ENCODE measurements at regions of chr17 and their contacts with region 1.

Region 1: DNA sequence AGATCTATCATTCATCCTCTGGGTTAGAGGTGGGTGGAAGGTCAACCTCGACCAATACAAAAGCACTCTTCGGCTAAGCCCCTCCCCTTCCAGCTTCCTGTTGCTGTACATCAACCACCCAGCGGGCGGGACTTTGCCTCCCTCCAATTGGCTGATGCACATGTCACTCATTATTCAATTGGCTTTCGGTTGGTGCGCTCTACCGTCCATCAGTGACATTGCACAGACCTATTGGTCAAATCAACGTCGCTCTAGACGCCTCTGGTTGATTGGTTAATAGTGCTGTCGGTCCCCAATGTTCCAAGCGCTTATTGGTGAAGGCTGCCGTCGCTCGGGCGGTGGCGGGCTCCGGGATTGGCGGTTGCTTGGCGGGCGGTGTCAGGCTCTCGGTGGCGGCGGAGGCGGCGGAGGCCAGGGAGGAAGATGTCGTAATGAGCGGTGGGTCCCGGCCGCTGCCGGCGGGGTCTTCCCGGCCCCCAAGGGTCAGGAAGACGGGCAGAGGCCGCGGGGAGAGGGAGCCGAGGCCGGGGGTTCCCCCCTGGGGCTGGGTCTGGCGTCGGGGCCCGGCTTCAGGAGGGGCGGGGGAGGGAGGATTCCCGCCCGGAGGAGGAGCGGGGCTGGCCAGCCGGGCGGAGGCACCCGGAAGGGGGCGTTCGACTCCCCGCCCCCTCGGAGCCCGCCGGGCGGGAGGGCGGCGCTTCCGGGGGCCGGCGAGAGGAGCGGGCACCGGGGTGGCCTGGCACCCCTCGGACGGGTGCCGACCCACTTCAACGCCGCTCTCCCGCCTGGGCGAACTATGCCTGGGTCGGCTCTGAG is at the start of gene SP2:
- DNase-seq: peak; percentile 93 to 100 (median 100)
- ATAC-seq: peak; percentile 88 to 89
- H3K4me3 Mint-ChIP-seq: peak within 1 kb of the TSS; percentile 89 to 100 (median 99)
- H3K27ac Mint-ChIP-seq: peak within 1 kb of the TSS; percentile 98 to 100 (median 100)
- H3K4me1 Mint-ChIP-seq: peaks cover 23 to 60% (median 54%) of the 10 kb centered on the region in 4 donors
- H3K27me3 Mint-ChIP-seq: peaks cover 0 to 3% (median 0%) of the 10 kb centered on the region in 5 donors
- polyA plus RNA-seq, gene SP2: 4.5 to 13.0 (median 9.6) TPM

Region 2: DNA sequence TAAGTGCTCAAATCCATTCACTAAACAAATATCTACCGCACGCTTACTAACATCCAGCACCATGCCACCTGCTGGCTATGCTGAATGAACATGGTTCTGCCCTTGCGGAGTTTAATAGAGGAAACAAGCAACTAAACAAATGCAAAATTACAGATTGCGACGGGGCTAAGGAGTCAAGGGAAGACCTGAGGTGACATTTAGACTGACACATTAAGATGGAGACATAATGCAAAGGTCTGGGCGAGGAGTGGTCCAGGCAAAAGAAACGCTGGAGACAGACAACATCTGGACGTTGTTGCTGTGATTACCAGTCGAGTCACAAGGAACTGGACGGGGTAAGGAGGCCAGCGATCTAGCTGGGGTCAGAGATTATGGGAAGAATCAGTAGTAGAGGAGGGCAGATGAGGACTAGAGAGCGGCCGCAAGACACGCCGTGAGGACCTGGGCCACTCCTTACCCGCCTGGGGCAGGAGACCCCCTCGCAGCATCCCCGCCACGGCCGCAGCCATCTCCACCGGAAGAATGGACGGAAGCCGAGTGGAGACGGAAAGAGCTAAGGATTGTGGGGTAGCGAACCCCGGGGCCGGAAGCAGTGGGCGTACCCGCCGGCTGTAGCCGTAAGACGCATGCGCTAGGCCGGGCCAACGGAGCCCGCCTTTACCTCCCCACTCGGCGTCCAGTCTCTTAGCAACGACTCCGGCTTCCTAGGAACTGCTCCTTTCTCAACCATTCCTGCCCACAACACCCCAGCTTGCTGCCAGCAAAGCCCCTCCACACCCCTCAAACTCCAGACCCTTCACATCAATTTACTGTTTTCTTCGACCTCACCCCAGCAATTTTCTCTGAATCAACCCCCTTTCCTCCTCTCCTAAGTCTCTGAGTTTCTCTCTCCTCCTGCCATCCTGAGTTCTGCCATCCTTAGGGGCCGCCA is 64.8 kb before region 1 on chr17 and contains the starts of genes LRRC46 and MRPL10:
- POLR2A ChIA-PET with region 1: interaction called, 203 read pairs
- DNase-seq: peak; percentile 82 to 94 (median 89)
- ATAC-seq: peak; percentile 91 to 93
- H3K4me3 Mint-ChIP-seq: peak within 1 kb of the TSS; percentile 92 to 99 (median 98)
- H3K27ac Mint-ChIP-seq: peak within 1 kb of the TSS; percentile 93 to 100 (median 96)
- H3K4me1 Mint-ChIP-seq: peaks cover 23 to 64% (median 54%) of the 10 kb centered on the region in 4 donors
- H3K27me3 Mint-ChIP-seq: no peaks in the 10 kb centered on the region
- polyA plus RNA-seq, gene LRRC46: 0.43 to 0.56 (median 0.48) TPM
- polyA plus RNA-seq, gene MRPL10: 38.3 to 68.5 (median 38.3) TPM

Region 3: GRCh38 chr17:47840740-47841603 is 55.1 kb before region 1 on chr17 and contains the start of gene SCRN2:
- POLR2A ChIA-PET with region 1: interaction called, 203 read pairs
- DNase-seq: peak; percentile 71 to 94 (median 82)
- ATAC-seq: peak; percentile 85 to 91
- H3K4me3 Mint-ChIP-seq: peak within 1 kb of the TSS; percentile 84 to 99 (median 94)
- H3K27ac Mint-ChIP-seq: peak within 1 kb of the TSS; percentile 67 to 95 (median 82)
- H3K4me1 Mint-ChIP-seq: peaks cover 15 to 39% (median 23%) of the 10 kb centered on the region in 4 donors
- H3K27me3 Mint-ChIP-seq: peaks cover 2 to 22% (median 14%) of the 10 kb centered on the region in 5 donors
- polyA plus RNA-seq, gene SCRN2: 19.3 to 37.9 (median 21.6) TPM

Region 4: DNA sequence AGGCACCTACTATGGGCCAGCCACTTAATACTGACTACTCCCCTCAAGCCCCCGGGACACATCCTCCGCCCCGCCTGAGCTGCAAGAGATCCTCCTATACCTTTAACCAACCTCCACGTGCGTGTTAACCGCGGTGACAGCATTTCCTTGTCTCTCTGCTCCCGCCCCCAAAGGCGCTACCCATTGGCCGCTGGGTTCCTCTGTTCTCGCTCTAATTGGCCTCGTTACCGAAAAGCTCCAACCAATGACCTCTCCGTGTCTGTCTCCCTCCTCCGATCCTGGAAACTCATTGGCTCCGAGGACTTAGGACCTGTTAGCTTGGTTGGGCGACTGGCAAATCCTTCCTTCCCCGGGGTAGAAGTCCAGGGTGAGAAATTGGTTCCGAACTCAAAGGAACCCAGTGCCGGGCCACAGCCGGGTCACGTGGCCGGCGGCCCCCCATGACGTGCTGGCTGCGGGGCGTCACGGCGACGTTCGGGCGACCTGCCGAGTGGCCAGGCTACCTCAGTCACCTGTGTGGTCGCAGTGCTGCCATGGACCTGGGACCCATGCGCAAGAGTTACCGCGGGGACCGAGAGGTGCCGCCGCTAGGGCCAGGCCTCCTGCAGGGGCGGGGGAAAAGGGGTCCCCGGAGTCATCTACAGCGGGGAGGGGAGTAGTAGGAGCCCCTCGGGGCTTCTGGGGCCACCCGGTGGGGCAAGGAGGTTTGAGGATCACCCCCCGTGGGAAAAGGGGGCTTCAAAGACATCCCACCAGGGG is 45.4 kb after region 1 on chr17 and contains the start of gene PNPO:
- POLR2A ChIA-PET with region 1: interaction called, 70 read pairs
- DNase-seq: peak; percentile 78 to 96 (median 92)
- ATAC-seq: peak; percentile 97
- H3K4me3 Mint-ChIP-seq: peak within 1 kb of the TSS; percentile 67 to 95 (median 91)
- H3K27ac Mint-ChIP-seq: peak within 1 kb of the TSS; percentile 68 to 97 (median 92)
- H3K4me1 Mint-ChIP-seq: peaks cover 31 to 63% (median 54%) of the 10 kb centered on the region in 4 donors
- H3K27me3 Mint-ChIP-seq: no peaks in the 10 kb centered on the region
- polyA plus RNA-seq, gene PNPO: 26.0 to 31.8 (median 29.9) TPM

Region 5: DNA sequence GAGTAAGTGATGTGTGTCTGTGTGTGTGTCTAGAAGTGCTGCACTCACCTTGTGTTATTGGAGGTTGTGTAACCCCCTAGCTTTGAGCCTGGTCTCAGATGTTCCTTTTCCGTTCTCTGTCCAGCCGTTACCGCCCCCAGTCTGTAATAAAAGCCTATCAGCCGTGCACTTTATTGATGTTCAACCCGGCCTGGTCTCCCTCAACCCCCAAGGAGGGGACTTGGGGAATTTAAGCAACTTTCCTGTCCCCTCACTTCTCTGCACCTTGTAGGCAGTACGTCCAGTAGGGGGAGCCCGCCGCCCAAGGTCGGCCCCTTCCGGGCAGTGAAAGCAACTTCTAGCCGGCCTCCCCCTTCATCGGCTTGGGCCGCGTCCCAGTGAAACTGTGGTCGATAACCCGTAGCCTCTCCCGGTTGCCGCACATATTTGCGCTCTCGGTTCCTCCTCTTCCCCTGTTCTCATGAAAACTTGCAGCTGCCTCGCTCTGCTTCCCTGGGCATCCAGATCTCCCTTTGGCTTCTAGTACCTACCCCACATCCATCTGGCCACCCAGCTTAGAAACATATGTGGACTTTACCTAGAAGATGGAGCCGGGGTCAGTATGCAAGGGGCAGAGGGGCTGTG is 53.2 kb after region 1 on chr17:
- POLR2A ChIA-PET with region 1: interaction called, 70 read pairs
- DNase-seq: peak; percentile 48 to 89 (median 71)
- ATAC-seq: peak; percentile 65 to 77
- H3K4me3 Mint-ChIP-seq: peak overlapping the region; percentile 72 to 85 (median 78)
- H3K27ac Mint-ChIP-seq: peak overlapping the region; percentile 64 to 92 (median 87)
- H3K4me1 Mint-ChIP-seq: peaks cover 36 to 69% (median 53%) of the 10 kb centered on the region in 4 donors
- H3K27me3 Mint-ChIP-seq: no peaks in the 10 kb centered on the region

Region 6: DNA sequence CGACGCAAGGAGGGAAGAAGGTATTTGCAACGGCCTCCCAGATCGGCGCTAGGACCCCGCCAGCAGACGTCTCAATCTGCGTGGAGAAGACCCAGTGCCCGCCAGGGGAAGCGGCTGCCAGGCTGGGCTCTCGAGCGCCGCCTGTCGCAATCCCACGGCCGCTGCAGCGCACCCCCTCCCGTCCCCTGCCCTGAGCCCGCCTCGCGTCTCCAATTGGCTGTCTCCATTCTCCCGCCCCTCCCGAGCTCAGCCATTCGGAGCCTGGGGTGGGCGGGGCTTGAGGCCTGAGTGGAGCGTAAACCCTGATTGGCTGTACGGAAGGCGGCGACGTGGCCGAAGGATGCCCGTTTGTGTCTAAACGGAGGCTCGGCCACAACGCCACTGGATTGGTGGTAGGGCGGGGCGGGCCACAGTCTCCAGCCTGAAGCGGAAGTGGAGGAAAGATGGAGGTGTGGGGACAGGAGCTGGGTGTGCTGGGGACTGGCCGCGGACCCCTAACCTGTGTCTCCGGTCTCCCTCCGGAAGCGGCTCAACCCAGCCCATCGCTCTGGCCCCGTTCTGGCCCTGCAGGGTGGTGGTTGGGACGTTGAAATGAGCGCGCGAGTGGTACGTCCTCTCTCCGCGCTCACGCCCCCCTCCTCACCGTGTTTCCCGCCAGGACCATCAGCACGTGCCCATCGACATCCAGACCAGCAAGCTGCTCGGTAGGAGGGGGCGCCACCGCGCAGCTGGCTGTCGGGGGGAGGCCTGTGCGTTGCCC is 74.8 kb after region 1 on chr17 and contains the start of gene CDK5RAP3:
- POLR2A ChIA-PET with region 1: interaction called, 56 read pairs
- DNase-seq: peak; percentile 94 to 99 (median 97)
- ATAC-seq: peak; percentile 97 to 98
- H3K4me3 Mint-ChIP-seq: peak within 1 kb of the TSS; percentile 81 to 100 (median 98)
- H3K27ac Mint-ChIP-seq: peak within 1 kb of the TSS; percentile 80 to 97 (median 92)
- H3K4me1 Mint-ChIP-seq: peaks cover 20 to 32% (median 29%) of the 10 kb centered on the region in 4 donors
- H3K27me3 Mint-ChIP-seq: peaks cover 0 to 1% (median 0%) of the 10 kb centered on the region in 5 donors
- polyA plus RNA-seq, gene CDK5RAP3: 63.6 to 73.0 (median 70.2) TPM